WTC11 (cell line): ENCODE measurements at regions of chr5 and their contacts with region 1.

Region 1: GRCh38 chr5:158074992-158075769 is 216.2 kb upstream of the CLINT1 start:
- DNase-seq: peak; percentile 66
- ATAC-seq: peak; percentile 87
- H3K4me3 Mint-ChIP-seq: 0 out of 2 replicates have a peak overlapping the region, but pooled peaks have one; percentile 15
- H3K27ac Mint-ChIP-seq: no peak overlapping the region
- H3K4me1 Mint-ChIP-seq: peaks cover 14% of the 10 kb centered on the region
- H3K27me3 Mint-ChIP-seq: peaks cover 3% of the 10 kb centered on the region
- CTCF ChIP-seq: peak; percentile 66

Region 2: GRCh38 chr5:158039911-158040347 is 35.3 kb before region 1 on chr5:
- CTCF ChIA-PET with region 1: no interaction called
- POLR2A ChIA-PET with region 1: no interaction called
- DNase-seq: no peak
- ATAC-seq: no peak
- H3K4me3 Mint-ChIP-seq: no peak overlapping the region
- H3K27ac Mint-ChIP-seq: no peak overlapping the region
- H3K4me1 Mint-ChIP-seq: no peaks in the 10 kb centered on the region
- H3K27me3 Mint-ChIP-seq: peaks cover 1% of the 10 kb centered on the region
- CTCF ChIP-seq: no peak

Region 3: GRCh38 chr5:158058208-158059120 is 16.7 kb before region 1 on chr5:
- CTCF ChIA-PET with region 1: interaction called, 28 read pairs
- POLR2A ChIA-PET with region 1: interaction called, 3 read pairs
- DNase-seq: no peak
- ATAC-seq: no peak
- H3K4me3 Mint-ChIP-seq: no peak overlapping the region
- H3K27ac Mint-ChIP-seq: no peak overlapping the region
- H3K4me1 Mint-ChIP-seq: peaks cover 6% of the 10 kb centered on the region
- H3K27me3 Mint-ChIP-seq: no peaks in the 10 kb centered on the region
- CTCF ChIP-seq: no peak

Region 4: GRCh38 chr5:158163451-158164295 is 88.5 kb after region 1 on chr5:
- CTCF ChIA-PET with region 1: interaction called, 13 read pairs
- POLR2A ChIA-PET with region 1: no interaction called
- DNase-seq: no peak
- ATAC-seq: no peak
- H3K4me3 Mint-ChIP-seq: no peak overlapping the region
- H3K27ac Mint-ChIP-seq: no peak overlapping the region
- H3K4me1 Mint-ChIP-seq: 0 out of 2 replicates have a peak, but pooled peaks cover 13% of the 10 kb centered on the region
- H3K27me3 Mint-ChIP-seq: no peaks in the 10 kb centered on the region
- CTCF ChIP-seq: no peak